WTC11 (cell line): ENCODE measurements at regions of chr1 and their contacts with region 1.

Region 1: GRCh38 chr1:154352581-154353459 is 27.5 kb downstream of the ATP8B2 start:
- DNase-seq: peak; percentile 73
- ATAC-seq: peak; percentile 69
- H3K4me3 Mint-ChIP-seq: peak overlapping the region; percentile 87
- H3K27ac Mint-ChIP-seq: no peak overlapping the region; the same call in none of the 2 replicates
- H3K4me1 Mint-ChIP-seq: peaks cover 13% of the 10 kb centered on the region
- H3K27me3 Mint-ChIP-seq: peaks cover 22% of the 10 kb centered on the region
- CTCF ChIP-seq: no peak

Region 2: GRCh38 chr1:154324669-154325582 is 27.9 kb before region 1 on chr1 and contains the start of gene ATP8B2:
- CTCF ChIA-PET with region 1: interaction called, 19 read pairs
- POLR2A ChIA-PET with region 1: interaction called, 3 read pairs
- DNase-seq: peak; percentile 90
- ATAC-seq: peak; percentile 62
- H3K4me3 Mint-ChIP-seq: peak within 1 kb of the TSS; percentile 95
- H3K27ac Mint-ChIP-seq: peak within 1 kb of the TSS; percentile 92
- H3K4me1 Mint-ChIP-seq: peaks cover 31% of the 10 kb centered on the region
- H3K27me3 Mint-ChIP-seq: peaks cover 4% of the 10 kb centered on the region
- CTCF ChIP-seq: peak; percentile 98
- total RNA-seq, gene ATP8B2: 38.8 to 50.0 TPM (median 40.8 TPM) in 3 replicates

Region 3: DNA sequence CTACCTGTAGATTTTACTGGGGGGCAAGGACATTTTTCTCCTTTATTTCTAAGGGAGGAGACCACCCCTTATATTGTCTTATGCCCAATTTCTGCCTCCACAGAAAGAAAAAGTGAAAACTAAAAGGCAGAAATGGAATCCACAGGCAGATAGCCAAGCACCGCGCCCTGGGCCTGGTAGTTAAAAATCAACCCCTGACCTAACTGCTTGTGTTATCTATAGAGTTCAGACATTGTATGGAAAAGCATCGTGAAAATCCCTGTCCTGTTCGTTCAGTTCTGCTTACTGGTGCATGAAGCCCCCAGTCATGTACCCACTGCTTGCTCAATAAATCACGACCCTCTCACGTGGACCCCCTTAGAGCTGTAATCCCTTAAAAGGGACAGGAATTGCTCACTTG is 18.6 kb after region 1 on chr1:
- CTCF ChIA-PET with region 1: no interaction called
- POLR2A ChIA-PET with region 1: no interaction called
- DNase-seq: no peak
- ATAC-seq: no peak
- H3K4me3 Mint-ChIP-seq: no peak overlapping the region
- H3K27ac Mint-ChIP-seq: 0 out of 2 replicates have a peak overlapping the region, but pooled peaks have one; percentile 39
- H3K4me1 Mint-ChIP-seq: no peaks in the 10 kb centered on the region
- H3K27me3 Mint-ChIP-seq: no peaks in the 10 kb centered on the region
- CTCF ChIP-seq: no peak